ENCODE measurements at regions of chr9 and their contacts with region 1.

Region 1: GRCh38 chr9:32442433-32442832 is 58.0 kb downstream of the ACO1 start:
- DNase-seq: no peak
- H3K4me3 ChIP-seq: no peak overlapping the region
- H3K27ac ChIP-seq: no peak overlapping the region
- H3K4me1 ChIP-seq: no peaks in the 10 kb centered on the region
- H3K27me3 ChIP-seq: no peaks in the 10 kb centered on the region
- CTCF ChIP-seq: no peak
- POLR2A ChIP-seq: no peak

Region 2: GRCh38 chr9:32502464-32502863 is 60.0 kb after region 1 on chr9:
- intact Hi-C with region 1: loop called (anchors 10 kb)
- DNase-seq: no peak
- H3K4me3 ChIP-seq: no peak overlapping the region
- H3K27ac ChIP-seq: no peak overlapping the region
- H3K4me1 ChIP-seq: peaks cover 0 to 13% (median 0%) of the 10 kb centered on the region in 6 donors
- H3K27me3 ChIP-seq: no peaks in the 10 kb centered on the region
- CTCF ChIP-seq: no peak
- POLR2A ChIP-seq: no peak

Region 3: DNA sequence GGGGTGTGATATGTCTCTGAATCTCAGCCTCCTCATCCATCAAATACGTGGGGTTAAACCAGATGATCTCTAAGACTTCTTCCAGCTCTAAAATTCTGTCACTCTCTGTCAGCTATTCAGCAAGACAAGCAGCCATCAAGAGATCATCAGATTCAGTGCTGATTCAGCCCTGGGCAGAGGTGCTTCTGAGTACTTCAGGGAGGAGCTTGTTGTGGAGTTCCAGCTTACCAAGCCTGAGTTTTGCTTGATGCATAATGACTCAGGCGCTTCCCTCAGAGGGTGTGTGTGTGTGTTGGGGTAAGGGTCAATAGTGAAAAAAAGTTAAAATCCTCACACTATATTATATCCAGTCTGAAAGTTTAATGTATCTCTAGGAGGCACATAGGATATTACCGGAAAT is 222.7 kb after region 1 on chr9:
- intact Hi-C with region 1: no loop called
- DNase-seq: no peak
- H3K4me3 ChIP-seq: no peak overlapping the region
- H3K27ac ChIP-seq: no peak overlapping the region
- H3K4me1 ChIP-seq: no peaks in the 10 kb centered on the region
- H3K27me3 ChIP-seq: no peaks in the 10 kb centered on the region
- CTCF ChIP-seq: no peak
- POLR2A ChIP-seq: no peak

Measured in spleen (tissue), 13 donors.